ENCODE measurements at regions of chr4 and their contacts with region 1.

Region 1: GRCh38 chr4:153115322-153116290 is 88.6 kb upstream of the TRIM2 start:
- DNase-seq: peak; percentile 41 to 92 (median 76)
- ATAC-seq: peak; percentile 52
- H3K4me3 ChIP-seq: peak overlapping the region in 1 of 2 experiments; percentile 31
- H3K4me3 Mint-ChIP-seq: no peak overlapping the region
- H3K27ac ChIP-seq: peak overlapping the region; percentile 58 to 78
- H3K27ac Mint-ChIP-seq: no peak overlapping the region
- H3K4me1 ChIP-seq: peaks cover 64% of the 10 kb centered on the region
- H3K4me1 Mint-ChIP-seq: peaks cover 9% of the 10 kb centered on the region
- H3K27me3 ChIP-seq: no peaks in the 10 kb centered on the region
- H3K27me3 Mint-ChIP-seq: no peaks in the 10 kb centered on the region
- CTCF ChIP-seq: no peak

Region 2: GRCh38 chr4:153095448-153096204 is 20.0 kb before region 1 on chr4:
- CTCF ChIA-PET with region 1: interaction called, 5 read pairs
- POLR2A ChIA-PET with region 1: interaction called, 4 read pairs
- intact Hi-C with region 1: loop called in 1 of 2 experiments (anchors 2 kb)
- DNase-seq: no peak
- ATAC-seq: no peak
- H3K4me3 ChIP-seq: no peak overlapping the region
- H3K4me3 Mint-ChIP-seq: no peak overlapping the region
- H3K27ac ChIP-seq: no peak overlapping the region
- H3K27ac Mint-ChIP-seq: no peak overlapping the region
- H3K4me1 ChIP-seq: peaks cover 4% of the 10 kb centered on the region
- H3K4me1 Mint-ChIP-seq: peaks cover 4% of the 10 kb centered on the region
- H3K27me3 ChIP-seq: no peaks in the 10 kb centered on the region
- H3K27me3 Mint-ChIP-seq: no peaks in the 10 kb centered on the region
- CTCF ChIP-seq: no peak